Transverse colon (tissue), 4 donors: ENCODE measurements at regions of chr9 and their contacts with region 1.

Region 1: DNA sequence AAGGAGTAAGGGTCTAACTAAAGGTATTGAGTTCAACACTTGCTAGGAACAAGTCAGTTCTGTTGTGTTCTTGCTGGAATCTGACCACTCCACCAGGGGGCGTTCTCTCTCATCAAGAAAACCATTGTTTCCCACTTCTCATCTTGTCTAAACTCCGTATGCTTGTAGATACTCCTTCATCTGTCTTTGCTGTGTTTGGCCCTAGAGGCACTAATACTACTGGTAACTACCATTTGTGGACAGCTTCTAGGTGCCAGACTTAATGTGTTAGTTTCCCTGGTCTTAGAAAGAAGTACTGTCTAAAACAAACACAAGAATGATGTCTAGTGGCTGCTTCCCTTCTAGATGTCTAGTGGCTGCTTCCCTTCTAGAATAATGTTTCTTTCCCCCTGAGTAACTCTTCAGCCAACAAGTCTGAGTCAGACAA is 18.7 kb upstream of the PTPDC1 start:
- DNase-seq: peak; percentile 80
- H3K4me3 ChIP-seq: no peak overlapping the region
- H3K27ac ChIP-seq: no peak overlapping the region
- H3K4me1 ChIP-seq: no peaks in the 10 kb centered on the region
- H3K27me3 ChIP-seq: no peaks in the 10 kb centered on the region
- CTCF ChIP-seq: peak; percentile 79 to 86 (median 83)
- EP300 ChIP-seq: no peak
- POLR2A ChIP-seq: no peak

Region 2: DNA sequence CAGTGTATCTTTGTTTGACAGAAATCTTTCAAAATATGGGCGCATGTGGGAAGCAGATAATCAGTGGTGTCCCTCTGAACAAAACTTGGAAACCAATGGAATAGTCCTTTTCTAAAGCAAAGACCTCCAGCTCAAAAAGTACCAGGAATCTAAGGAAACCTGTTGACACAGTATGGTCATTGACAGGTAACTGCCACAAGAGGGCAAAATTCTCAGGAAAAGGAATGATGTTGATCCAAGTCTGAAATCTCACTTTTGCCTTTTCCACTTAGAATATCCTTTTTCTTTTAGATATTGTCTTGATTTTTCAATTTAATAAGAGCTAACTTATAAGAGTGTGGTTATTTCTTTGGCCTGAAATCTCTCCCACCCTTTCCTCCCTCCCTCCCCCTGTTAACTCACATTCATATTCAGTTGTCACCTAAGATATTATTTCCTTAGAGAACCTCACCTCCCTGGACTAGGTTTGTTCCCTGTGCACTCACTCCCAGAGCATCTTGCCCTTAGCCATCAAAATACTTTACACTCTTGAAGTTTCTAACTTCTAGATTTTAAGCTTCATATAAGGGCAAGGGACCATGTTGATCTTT is 51.4 kb before region 1 on chr9:
- in situ Hi-C with region 1: loop called in 1 of 4 experiments (anchors 5 kb)
- intact Hi-C with region 1: no loop called
- DNase-seq: no peak
- H3K4me3 ChIP-seq: no peak overlapping the region
- H3K27ac ChIP-seq: no peak overlapping the region
- H3K4me1 ChIP-seq: peaks cover 0 to 21% (median 2%) of the 10 kb centered on the region in 4 donors
- H3K27me3 ChIP-seq: no peaks in the 10 kb centered on the region
- CTCF ChIP-seq: peak; percentile 50 to 65 (median 57)
- EP300 ChIP-seq: no peak
- POLR2A ChIP-seq: no peak

Region 3: GRCh38 chr9:94213511-94214124 is 148.1 kb after region 1 on chr9:
- in situ Hi-C with region 1: loop called (anchors 5 to 10 kb)
- intact Hi-C with region 1: loop called (anchors 2 kb)
- DNase-seq: peak; percentile 76
- H3K4me3 ChIP-seq: no peak overlapping the region
- H3K27ac ChIP-seq: no peak overlapping the region
- H3K4me1 ChIP-seq: no peaks in the 10 kb centered on the region
- H3K27me3 ChIP-seq: no peaks in the 10 kb centered on the region
- CTCF ChIP-seq: peak; percentile 80 to 89 (median 86)
- EP300 ChIP-seq: no peak
- POLR2A ChIP-seq: no peak